ENCODE measurements at regions of chr7 and their contacts with region 1.

Region 1: GRCh38 chr7:50610521-50611277 is 45.5 kb upstream of the DDC start:
- DNase-seq: no peak
- ATAC-seq: peak in 1 of 2 donors; percentile 32

Region 2: DNA sequence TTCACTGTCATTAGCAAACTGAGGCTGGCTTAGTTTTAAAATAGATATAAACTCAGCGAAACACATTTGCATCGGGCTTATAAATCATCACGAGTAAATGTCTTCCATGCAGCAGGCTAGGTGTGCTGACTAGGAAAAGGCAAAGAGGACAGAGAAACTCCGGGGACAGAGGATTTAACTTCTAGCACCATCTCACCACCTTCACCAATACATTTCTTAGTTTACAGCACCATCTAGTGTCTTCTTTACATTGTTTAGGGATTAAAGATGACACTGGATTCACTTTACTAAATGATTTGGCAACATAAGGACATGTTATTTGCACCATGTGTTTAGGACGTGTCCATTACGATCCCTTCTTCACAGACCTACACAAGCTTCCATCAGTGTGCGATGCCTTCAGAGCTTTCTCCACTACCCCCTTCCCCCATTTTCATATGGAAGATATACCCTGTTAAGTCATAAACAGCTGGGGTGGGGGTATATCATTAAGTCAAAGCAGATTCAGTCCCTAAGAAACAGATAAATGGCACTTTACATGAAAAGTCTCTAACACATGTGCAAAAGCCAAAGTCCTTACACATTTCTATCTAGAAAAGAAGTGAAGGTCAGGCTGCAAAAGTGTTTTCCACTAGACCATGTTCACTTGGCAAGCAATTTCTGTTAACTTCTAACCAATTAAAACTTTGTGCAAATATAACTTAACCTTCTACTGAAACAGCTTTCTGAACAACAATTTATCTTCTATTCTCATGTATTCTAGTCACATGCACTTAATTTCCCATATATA is 68.7 kb after region 1 on chr7:
- intact Hi-C with region 1: loop called (anchors 2 to 5 kb)
- DNase-seq: no peak
- ATAC-seq: peak; percentile 60 to 82

Region 3: DNA sequence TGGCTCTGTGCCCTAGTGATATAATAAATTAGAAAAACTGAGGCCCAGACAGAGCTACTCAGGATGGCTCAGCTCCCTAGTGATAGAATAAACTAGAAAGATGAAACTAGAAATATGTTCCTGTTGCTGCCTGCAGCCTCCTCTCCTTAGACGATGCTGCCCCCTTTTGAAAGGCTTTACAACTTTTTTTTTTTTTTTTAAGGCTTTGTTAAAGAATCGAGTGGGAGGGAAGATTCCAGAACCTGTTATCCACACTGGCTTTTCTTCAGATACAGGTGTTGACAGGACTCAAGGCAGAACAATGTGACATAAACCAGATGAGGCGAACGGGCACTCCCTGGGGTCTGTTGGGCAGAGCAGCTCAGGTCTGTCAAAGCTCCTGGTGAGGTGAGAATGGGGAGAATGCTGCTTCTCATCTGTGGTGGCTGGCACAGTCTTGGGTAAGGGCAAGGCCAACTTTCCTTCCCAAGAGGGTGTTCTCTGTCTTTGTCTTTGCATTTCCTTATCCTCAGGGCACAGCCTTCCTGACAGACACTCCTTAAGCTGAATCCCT is 530.8 kb after region 1 on chr7:
- intact Hi-C with region 1: loop called in 1 of 2 experiments (anchors 10 kb)
- DNase-seq: no peak
- ATAC-seq: peak; percentile 50 to 78

Region 4: GRCh38 chr7:51154201-51154600 is 543.5 kb after region 1 on chr7:
- intact Hi-C with region 1: loop called (anchors 10 kb)
- DNase-seq: no peak
- ATAC-seq: peak in 1 of 2 donors; percentile 36